ENCODE measurements at regions of chr11 and their contacts with region 1.

Region 1: GRCh38 chr11:22875869-22876473 is 15.7 kb upstream of the CCDC179 start:
- DNase-seq: peak; percentile 84
- H3K4me3 ChIP-seq: no peak overlapping the region
- H3K27ac ChIP-seq: no peak overlapping the region
- H3K27me3 ChIP-seq: no peaks in the 10 kb centered on the region
- CTCF ChIP-seq: peak; percentile 74

Region 2: GRCh38 chr11:22798901-22799300 is 77.1 kb before region 1 on chr11:
- CTCF ChIA-PET with region 1: no interaction called
- POLR2A ChIA-PET with region 1: no interaction called
- DNase-seq: no peak
- H3K4me3 ChIP-seq: no peak overlapping the region
- H3K27ac ChIP-seq: no peak overlapping the region
- H3K27me3 ChIP-seq: no peaks in the 10 kb centered on the region
- CTCF ChIP-seq: no peak

Region 3: DNA sequence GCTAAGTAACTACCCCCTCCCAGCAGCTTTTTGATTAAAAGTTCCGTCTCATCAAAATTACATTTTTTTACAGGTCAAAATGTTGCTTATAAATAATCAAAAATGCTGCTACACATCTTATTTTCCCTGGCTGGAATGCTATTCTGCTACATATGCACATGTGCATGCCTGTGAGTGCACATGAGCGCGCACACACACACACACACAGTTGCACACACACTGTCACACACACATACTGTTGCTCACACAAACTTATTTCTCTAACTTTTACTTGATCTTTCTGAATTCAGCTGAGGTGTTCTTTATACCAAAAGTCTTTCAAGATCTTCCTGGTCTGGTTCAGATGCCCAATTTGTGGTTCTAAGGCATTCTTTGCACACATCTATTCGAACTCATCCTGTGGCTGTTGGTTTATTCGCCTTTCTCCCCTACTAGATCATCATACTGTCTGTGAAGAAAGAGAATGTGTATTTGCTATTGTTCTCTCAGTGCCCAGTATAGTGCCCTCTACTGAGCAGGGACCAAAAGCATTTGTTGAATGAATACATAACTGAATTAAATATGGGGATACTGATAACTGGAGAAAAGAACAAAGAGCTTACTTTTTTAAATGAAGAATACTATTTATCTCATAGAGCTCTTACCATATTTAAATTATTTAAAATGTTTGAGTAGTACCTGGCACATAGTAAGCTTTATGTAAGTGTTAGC is 52.4 kb after region 1 on chr11:
- CTCF ChIA-PET with region 1: interaction called, 10 read pairs
- POLR2A ChIA-PET with region 1: no interaction called
- DNase-seq: no peak
- H3K4me3 ChIP-seq: no peak overlapping the region
- H3K27ac ChIP-seq: no peak overlapping the region
- H3K27me3 ChIP-seq: no peaks in the 10 kb centered on the region
- CTCF ChIP-seq: no peak

Region 4: GRCh38 chr11:23021287-23021863 is 145.4 kb after region 1 on chr11:
- CTCF ChIA-PET with region 1: interaction called, 13 read pairs
- POLR2A ChIA-PET with region 1: no interaction called
- DNase-seq: peak; percentile 21
- H3K4me3 ChIP-seq: no peak overlapping the region
- H3K27ac ChIP-seq: no peak overlapping the region
- H3K27me3 ChIP-seq: no peaks in the 10 kb centered on the region
- CTCF ChIP-seq: peak; percentile 86

Region 5: GRCh38 chr11:23112987-23113886 is 237.3 kb after region 1 on chr11:
- CTCF ChIA-PET with region 1: interaction called, 11 read pairs
- POLR2A ChIA-PET with region 1: no interaction called
- DNase-seq: no peak
- H3K4me3 ChIP-seq: no peak overlapping the region
- H3K27ac ChIP-seq: no peak overlapping the region
- H3K27me3 ChIP-seq: no peaks in the 10 kb centered on the region
- CTCF ChIP-seq: peak; percentile 74